AG04450 (cell line): ENCODE measurements at regions of chr11 and their contacts with region 1.

Region 1: DNA sequence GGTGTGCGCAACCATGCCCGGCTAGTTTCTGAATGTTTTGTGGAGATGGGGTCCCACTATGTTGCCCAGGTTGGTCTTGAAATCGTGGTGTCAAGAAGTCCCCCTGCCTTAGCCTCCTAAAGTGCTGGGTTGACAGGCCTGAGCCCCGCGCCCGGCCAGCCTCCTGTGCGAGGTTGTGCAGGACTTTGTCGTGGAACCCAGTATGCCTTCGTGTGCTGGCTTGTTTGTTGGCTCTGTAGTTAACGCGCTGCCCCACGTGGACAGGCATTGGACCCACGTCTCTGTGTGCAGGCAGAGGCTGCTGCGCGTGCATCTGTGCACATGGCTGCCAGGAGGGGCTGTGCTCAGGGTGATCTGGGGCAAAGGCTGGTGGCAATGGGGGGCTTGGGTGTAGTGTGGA is 33.9 kb upstream of the ZNF195 start:
- DNase-seq: no peak
- H3K4me3 ChIP-seq: no peak overlapping the region
- H3K27ac ChIP-seq: no peak overlapping the region
- H3K27me3 ChIP-seq: no peaks in the 10 kb centered on the region
- CTCF ChIP-seq: no peak

Region 2: GRCh38 chr11:2901854-2902783 is 510.7 kb before region 1 on chr11:
- CTCF ChIA-PET with region 1: no interaction called
- POLR2A ChIA-PET with region 1: no interaction called
- DNase-seq: peak; percentile 63
- H3K4me3 ChIP-seq: peak overlapping the region; percentile 80
- H3K27ac ChIP-seq: peak overlapping the region; percentile 52
- H3K27me3 ChIP-seq: no peaks in the 10 kb centered on the region
- CTCF ChIP-seq: no peak

Region 3: GRCh38 chr11:3177931-3178330 is 234.9 kb before region 1 on chr11:
- CTCF ChIA-PET with region 1: no interaction called
- POLR2A ChIA-PET with region 1: no interaction called
- DNase-seq: no peak
- H3K4me3 ChIP-seq: no peak overlapping the region
- H3K27ac ChIP-seq: no peak overlapping the region
- H3K27me3 ChIP-seq: peaks cover 7% of the 10 kb centered on the region
- CTCF ChIP-seq: no peak

Region 4: GRCh38 chr11:3378426-3379423 is 34.1 kb before region 1 on chr11 and contains the start of gene ZNF195:
- CTCF ChIA-PET with region 1: interaction called, 10 read pairs
- POLR2A ChIA-PET with region 1: no interaction called
- DNase-seq: peak; percentile 72
- H3K4me3 ChIP-seq: peak within 1 kb of the TSS; percentile 92
- H3K27ac ChIP-seq: peak within 1 kb of the TSS; percentile 81
- H3K27me3 ChIP-seq: peaks cover 6% of the 10 kb centered on the region
- CTCF ChIP-seq: no peak
- polyA plus RNA-seq, gene ZNF195: 11.3 and 14.5 TPM in 2 replicates